HepG2 (cell line): ENCODE measurements at regions of chr1 and their contacts with region 1.

Region 1: DNA sequence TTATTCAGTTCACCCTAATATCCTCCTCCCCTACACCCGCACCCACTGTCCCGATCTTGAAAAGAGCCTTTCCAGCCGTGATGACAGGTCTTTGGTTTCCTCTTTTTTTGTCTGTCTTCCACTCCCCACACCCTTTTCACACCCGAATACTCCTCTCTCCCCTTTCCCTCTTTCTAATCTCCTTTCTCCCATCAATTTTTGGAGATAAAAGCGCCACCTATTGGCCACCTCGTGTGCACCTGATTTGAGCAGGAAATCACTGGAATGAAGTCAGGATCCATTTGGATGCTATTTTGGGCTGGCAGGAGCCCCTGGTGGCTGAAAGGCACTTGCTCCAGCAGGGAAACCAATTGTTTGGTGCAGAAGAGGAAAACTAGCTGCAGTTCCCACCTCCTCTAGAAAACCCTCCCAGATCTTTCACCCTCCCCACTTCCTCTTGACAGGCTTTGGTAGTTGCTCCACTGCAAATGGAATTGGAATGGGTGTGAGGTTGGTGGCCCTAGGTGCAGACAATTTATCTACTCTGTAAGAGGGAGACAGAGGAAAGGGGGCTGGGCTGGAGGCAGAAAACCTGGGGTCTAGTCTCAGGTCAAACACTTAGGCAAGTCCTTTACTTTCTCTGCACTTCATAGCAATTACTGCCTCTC is 8.4 kb downstream of the FOXE3 start:
- DNase-seq: peak; percentile 52
- ATAC-seq: peak; percentile 86
- H3K4me3 ChIP-seq: no peak overlapping the region
- H3K27ac ChIP-seq: no peak overlapping the region
- H3K4me1 ChIP-seq: no peaks in the 10 kb centered on the region
- H3K27me3 ChIP-seq: no peaks in the 10 kb centered on the region; a peak in 1 of 5 replicates
- CTCF ChIP-seq: peak; percentile 78
- EP300 ChIP-seq: no peak
- POLR2A ChIP-seq: no peak
- RAD21 ChIP-seq: peak; percentile 41; the same call in 1 of the 2 replicates

Region 2: DNA sequence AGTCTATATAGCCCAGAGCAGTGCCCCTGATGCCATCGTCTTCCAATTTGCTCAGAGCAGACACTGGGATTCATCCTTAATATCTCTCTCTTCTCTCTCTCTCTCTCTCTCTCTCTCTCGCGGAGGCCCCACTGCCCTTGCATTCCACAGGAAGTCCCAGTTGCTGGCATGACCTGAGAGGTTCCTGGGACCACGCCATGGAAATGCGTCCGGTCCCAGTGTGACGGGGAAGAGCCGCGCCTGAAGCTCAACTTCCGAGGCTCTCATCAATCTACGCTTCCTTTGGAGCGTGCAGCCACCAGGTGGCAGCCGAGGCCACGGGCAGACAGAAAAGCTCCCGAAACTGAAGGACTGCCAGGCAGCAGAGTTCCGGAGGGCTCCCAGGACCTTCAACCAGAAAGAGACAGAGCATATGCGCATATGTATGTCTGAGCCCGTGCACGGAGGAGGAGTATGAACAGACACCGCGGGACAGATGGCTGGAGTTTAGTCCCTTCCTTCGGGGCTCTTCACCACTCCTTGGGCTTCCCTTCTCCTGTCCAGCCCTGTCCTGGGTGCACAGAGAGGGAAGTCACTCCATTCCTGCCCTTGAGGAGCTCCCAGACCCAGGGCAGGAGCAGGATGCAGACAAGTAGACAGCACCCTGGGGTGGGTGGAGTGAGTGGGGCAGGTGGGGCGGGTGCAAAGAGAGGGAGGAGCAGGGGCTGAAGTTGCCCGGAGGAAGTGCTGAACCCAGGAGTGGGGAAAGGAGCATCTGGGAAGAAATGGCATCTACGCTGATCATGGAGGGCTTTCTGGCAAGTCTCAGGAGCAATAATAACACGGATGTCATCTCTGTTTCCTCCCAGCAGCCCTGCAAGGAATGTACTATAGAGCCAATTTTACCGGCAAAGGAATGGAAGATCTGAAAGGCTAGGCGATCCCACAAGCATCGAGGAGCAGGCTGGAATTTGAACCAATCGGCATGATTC is 245.2 kb before region 1 on chr1:
- CTCF ChIA-PET with region 1: no interaction called
- POLR2A ChIA-PET with region 1: no interaction called
- in situ Hi-C with region 1: no loop called
- intact Hi-C with region 1: loop called (anchors 1 kb)
- DNase-seq: peak; percentile 89
- ATAC-seq: peak; percentile 68
- H3K4me3 ChIP-seq: peak overlapping the region; percentile 53 to 76 (median 65)
- H3K27ac ChIP-seq: peak overlapping the region; percentile 16
- H3K4me1 ChIP-seq: peaks cover 79% of the 10 kb centered on the region
- H3K27me3 ChIP-seq: no peaks in the 10 kb centered on the region; a peak in 1 of 5 replicates
- CTCF ChIP-seq: peak; percentile 99
- EP300 ChIP-seq: no peak
- POLR2A ChIP-seq: no peak
- RAD21 ChIP-seq: peak; percentile 97

Region 3: DNA sequence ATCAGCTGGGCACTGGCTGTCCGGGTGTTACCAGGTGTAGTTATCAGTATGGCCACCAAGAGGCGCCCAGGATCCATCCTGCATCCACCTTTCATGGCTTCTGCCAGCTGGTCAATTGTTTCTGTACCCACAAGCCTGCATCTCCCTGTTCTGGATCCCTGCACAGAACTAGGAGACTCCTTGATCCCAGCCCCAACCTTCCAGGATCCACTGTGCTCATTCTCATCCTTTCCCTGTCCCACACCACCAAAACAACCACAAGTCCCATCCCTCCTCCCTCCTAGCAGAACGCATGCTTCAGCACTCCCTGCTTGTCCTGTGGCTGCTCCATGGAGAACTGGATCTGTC is 35.6 kb before region 1 on chr1:
- CTCF ChIA-PET with region 1: interaction called, 13 read pairs
- POLR2A ChIA-PET with region 1: no interaction called
- in situ Hi-C with region 1: loop called (anchors 5 kb)
- intact Hi-C with region 1: loop called (anchors 1 kb)
- DNase-seq: peak; percentile 62
- ATAC-seq: peak; percentile 80
- H3K4me3 ChIP-seq: no peak overlapping the region
- H3K27ac ChIP-seq: no peak overlapping the region
- H3K4me1 ChIP-seq: peaks cover 54% of the 10 kb centered on the region
- H3K27me3 ChIP-seq: no peaks in the 10 kb centered on the region
- CTCF ChIP-seq: peak; percentile 83
- EP300 ChIP-seq: no peak
- POLR2A ChIP-seq: no peak; a peak in 1 of 4 replicates
- RAD21 ChIP-seq: peak; percentile 81